ENCODE measurements at regions of chr7 and their contacts with region 1.

Region 1: DNA sequence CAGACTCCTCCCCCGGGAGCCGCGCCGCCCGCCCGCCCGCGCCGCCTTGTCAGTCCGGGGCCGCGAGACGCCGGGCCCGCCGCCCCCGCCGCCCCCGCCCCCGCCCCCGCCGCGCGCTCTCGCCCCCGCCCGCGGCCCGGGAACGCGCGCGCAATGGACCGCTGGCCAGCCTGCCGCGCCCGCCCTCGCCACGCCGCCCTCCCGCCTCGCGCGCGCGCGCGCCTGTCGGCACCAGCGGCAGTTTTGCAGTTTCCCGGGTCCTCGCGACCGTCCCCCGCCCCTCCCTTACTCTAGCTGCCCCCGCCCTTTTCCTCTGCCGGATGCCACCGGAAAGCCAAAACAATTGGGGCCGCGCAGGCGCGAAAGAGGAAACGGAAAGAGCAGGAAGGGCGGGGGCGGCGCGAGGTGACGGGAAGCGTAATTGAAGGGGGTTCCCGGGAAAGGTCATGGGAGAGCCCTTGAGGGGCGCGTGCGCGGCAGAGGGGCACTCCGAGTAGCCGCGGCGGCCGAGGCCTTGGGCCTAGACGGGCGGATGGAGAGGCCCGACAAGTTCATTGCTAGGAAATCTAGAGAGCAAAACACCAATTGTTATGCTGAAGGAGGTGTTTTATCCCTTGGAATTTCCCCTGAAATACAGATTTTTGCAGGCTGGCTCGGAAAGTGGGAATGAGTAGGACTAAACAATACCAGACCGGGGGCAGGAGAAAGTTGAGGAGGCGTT is 400 bp upstream of the KBTBD2 start:
- DNase-seq: peak; percentile 99
- ATAC-seq: peak; percentile 64
- H3K4me3 ChIP-seq: peak overlapping the region; percentile 18 to 82 (median 74)
- H3K4me3 Mint-ChIP-seq: peak overlapping the region; percentile 87
- H3K27ac ChIP-seq: peak overlapping the region; percentile 98 to 100
- H3K27ac Mint-ChIP-seq: peak overlapping the region; percentile 96
- H3K4me1 ChIP-seq: peaks cover 36 to 39% of the 10 kb centered on the region in 2 donors
- H3K4me1 Mint-ChIP-seq: peaks cover 46% of the 10 kb centered on the region
- H3K27me3 ChIP-seq: no peaks in the 10 kb centered on the region
- H3K27me3 Mint-ChIP-seq: peaks cover 2% of the 10 kb centered on the region
- CTCF ChIP-seq: no peak

Region 2: GRCh38 chr7:32326078-32326477 is 565.9 kb before region 1 on chr7:
- CTCF ChIA-PET with region 1: no interaction called
- POLR2A ChIA-PET with region 1: no interaction called
- intact Hi-C with region 1: no loop called
- DNase-seq: no peak
- ATAC-seq: no peak
- H3K4me3 ChIP-seq: no peak overlapping the region
- H3K4me3 Mint-ChIP-seq: no peak overlapping the region
- H3K27ac ChIP-seq: no peak overlapping the region
- H3K27ac Mint-ChIP-seq: no peak overlapping the region
- H3K4me1 ChIP-seq: no peaks in the 10 kb centered on the region
- H3K4me1 Mint-ChIP-seq: no peaks in the 10 kb centered on the region
- H3K27me3 ChIP-seq: no peaks in the 10 kb centered on the region
- H3K27me3 Mint-ChIP-seq: peaks cover 7% of the 10 kb centered on the region
- CTCF ChIP-seq: no peak

Region 3: DNA sequence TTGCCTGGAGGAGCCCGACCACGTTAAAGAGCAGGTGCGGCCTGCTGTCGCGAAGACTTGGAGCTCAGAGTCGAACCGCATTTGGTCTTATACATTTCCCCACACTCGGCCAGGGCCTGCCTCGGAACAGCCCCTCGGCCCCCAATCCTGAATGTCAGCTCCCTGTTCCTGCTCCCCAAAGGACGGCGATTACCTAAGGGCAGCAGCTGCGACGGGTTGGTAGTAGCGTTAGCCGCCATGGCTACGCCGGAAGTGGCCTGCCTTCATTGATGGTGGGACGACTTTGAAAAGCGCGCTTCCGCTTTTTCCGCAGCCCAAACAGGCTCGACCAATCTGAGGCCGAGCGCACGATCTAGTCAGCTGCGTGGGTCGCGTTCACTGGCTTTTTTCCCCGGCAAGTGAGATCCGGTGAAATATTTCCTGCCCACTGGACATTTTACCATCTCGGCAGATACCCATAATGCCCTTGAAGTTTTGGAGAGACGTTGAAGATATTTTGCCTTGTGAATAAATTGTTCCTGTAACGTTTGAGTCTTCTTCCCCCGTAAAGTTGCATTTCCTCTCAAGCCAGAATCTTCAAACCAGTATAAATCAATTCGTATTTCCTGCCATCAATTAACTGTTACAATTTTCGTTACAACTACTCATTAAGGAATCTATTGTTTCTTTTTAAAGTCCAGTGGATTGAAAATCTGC is 401.7 kb before region 1 on chr7 and contains the start of gene LSM5:
- CTCF ChIA-PET with region 1: interaction called, 3 read pairs
- POLR2A ChIA-PET with region 1: no interaction called
- intact Hi-C with region 1: loop called (anchors 1 kb)
- DNase-seq: peak; percentile 94
- ATAC-seq: peak; percentile 57
- H3K4me3 ChIP-seq: peak within 1 kb of the TSS; percentile 81 to 97 (median 91)
- H3K4me3 Mint-ChIP-seq: peak within 1 kb of the TSS; percentile 91
- H3K27ac ChIP-seq: peak within 1 kb of the TSS; percentile 78 to 87
- H3K27ac Mint-ChIP-seq: peak within 1 kb of the TSS; percentile 91
- H3K4me1 ChIP-seq: peaks cover 8 to 16% of the 10 kb centered on the region in 2 donors
- H3K4me1 Mint-ChIP-seq: peaks cover 28% of the 10 kb centered on the region
- H3K27me3 ChIP-seq: no peaks in the 10 kb centered on the region
- H3K27me3 Mint-ChIP-seq: no peaks in the 10 kb centered on the region
- CTCF ChIP-seq: no peak
- total RNA-seq, gene LSM5: 32.1 and 34.7 TPM in 2 replicates

Region 4: GRCh38 chr7:32803406-32804141 is 88.4 kb before region 1 on chr7:
- CTCF ChIA-PET with region 1: no interaction called
- POLR2A ChIA-PET with region 1: no interaction called
- intact Hi-C with region 1: no loop called
- DNase-seq: no peak
- ATAC-seq: no peak
- H3K4me3 ChIP-seq: no peak overlapping the region
- H3K4me3 Mint-ChIP-seq: no peak overlapping the region
- H3K27ac ChIP-seq: no peak overlapping the region
- H3K27ac Mint-ChIP-seq: no peak overlapping the region
- H3K4me1 ChIP-seq: no peaks in the 10 kb centered on the region
- H3K4me1 Mint-ChIP-seq: peaks cover 2% of the 10 kb centered on the region
- H3K27me3 ChIP-seq: peaks cover 0 to 3% (median 0%) of the 10 kb centered on the region in 4 experiments
- H3K27me3 Mint-ChIP-seq: no peaks in the 10 kb centered on the region
- CTCF ChIP-seq: no peak

Region 5: GRCh38 chr7:32858648-32859047 is 33.3 kb before region 1 on chr7:
- CTCF ChIA-PET with region 1: no interaction called
- POLR2A ChIA-PET with region 1: no interaction called
- intact Hi-C with region 1: no loop called
- DNase-seq: no peak
- ATAC-seq: no peak
- H3K4me3 ChIP-seq: no peak overlapping the region
- H3K4me3 Mint-ChIP-seq: no peak overlapping the region
- H3K27ac ChIP-seq: no peak overlapping the region
- H3K27ac Mint-ChIP-seq: no peak overlapping the region
- H3K4me1 ChIP-seq: no peaks in the 10 kb centered on the region
- H3K4me1 Mint-ChIP-seq: peaks cover under 1% of the 10 kb centered on the region
- H3K27me3 ChIP-seq: peaks cover 0 to 2% (median 1%) of the 10 kb centered on the region in 4 experiments
- H3K27me3 Mint-ChIP-seq: peaks cover 16% of the 10 kb centered on the region
- CTCF ChIP-seq: no peak

Region 6: GRCh38 chr7:32905175-32905662 is 13.3 kb after region 1 on chr7:
- CTCF ChIA-PET with region 1: interaction called, 10 read pairs
- POLR2A ChIA-PET with region 1: interaction called, 3 read pairs
- intact Hi-C with region 1: loop called (anchors 1 kb)
- DNase-seq: peak; percentile 70
- ATAC-seq: peak; percentile 56
- H3K4me3 ChIP-seq: peak overlapping the region in 4 of 5 experiments; percentile 6 to 52 (median 30)
- H3K4me3 Mint-ChIP-seq: peak overlapping the region; percentile 73
- H3K27ac ChIP-seq: no peak overlapping the region
- H3K27ac Mint-ChIP-seq: peak overlapping the region; percentile 41
- H3K4me1 ChIP-seq: peaks cover 5 to 6% of the 10 kb centered on the region in 2 donors
- H3K4me1 Mint-ChIP-seq: peaks cover 7% of the 10 kb centered on the region
- H3K27me3 ChIP-seq: no peaks in the 10 kb centered on the region
- H3K27me3 Mint-ChIP-seq: peaks cover 11% of the 10 kb centered on the region
- CTCF ChIP-seq: no peak

Region 7: GRCh38 chr7:33040803-33041516 is 149.0 kb after region 1 on chr7:
- CTCF ChIA-PET with region 1: no interaction called
- POLR2A ChIA-PET with region 1: interaction called, 5 read pairs
- intact Hi-C with region 1: loop called (anchors 2 kb)
- DNase-seq: peak; percentile 85
- ATAC-seq: peak; percentile 96
- H3K4me3 ChIP-seq: peak overlapping the region; percentile 26 to 79 (median 44)
- H3K4me3 Mint-ChIP-seq: peak overlapping the region; percentile 84
- H3K27ac ChIP-seq: peak overlapping the region; percentile 2 to 73
- H3K27ac Mint-ChIP-seq: peak overlapping the region; percentile 86
- H3K4me1 ChIP-seq: peaks cover 21 to 40% of the 10 kb centered on the region in 2 donors
- H3K4me1 Mint-ChIP-seq: peaks cover 67% of the 10 kb centered on the region
- H3K27me3 ChIP-seq: no peaks in the 10 kb centered on the region
- H3K27me3 Mint-ChIP-seq: no peaks in the 10 kb centered on the region
- CTCF ChIP-seq: no peak

Region 8: GRCh38 chr7:33128990-33129805 is 237.2 kb after region 1 on chr7 and contains the start of gene BBS9:
- CTCF ChIA-PET with region 1: no interaction called
- POLR2A ChIA-PET with region 1: no interaction called
- intact Hi-C with region 1: loop called (anchors 1 kb)
- DNase-seq: peak; percentile 96
- ATAC-seq: peak; percentile 91
- H3K4me3 ChIP-seq: peak within 1 kb of the TSS; percentile 39 to 81 (median 62)
- H3K4me3 Mint-ChIP-seq: peak within 1 kb of the TSS; percentile 97
- H3K27ac ChIP-seq: peak within 1 kb of the TSS; percentile 22 to 79
- H3K27ac Mint-ChIP-seq: peak within 1 kb of the TSS; percentile 91
- H3K4me1 ChIP-seq: peaks cover 7 to 9% of the 10 kb centered on the region in 2 donors
- H3K4me1 Mint-ChIP-seq: peaks cover 24% of the 10 kb centered on the region
- H3K27me3 ChIP-seq: no peaks in the 10 kb centered on the region
- H3K27me3 Mint-ChIP-seq: no peaks in the 10 kb centered on the region
- CTCF ChIP-seq: peak; percentile 18
- total RNA-seq, gene BBS9: 45.2 and 48.4 TPM in 2 replicates

Measured in B cell (primary cell).